Activated B cell treated with CpG ODN at 0.5 μM for 24 hours (primary cell): ENCODE measurements at regions of chr5 and their contacts with region 1.

Region 1: GRCh38 chr5:65925601-65926275 is 637 bp upstream of the ERBIN start:
- DNase-seq: peak; percentile 82
- ATAC-seq: peak; percentile 73
- H3K4me3 Mint-ChIP-seq: peak overlapping the region; percentile 93
- H3K27ac Mint-ChIP-seq: peak overlapping the region; percentile 96
- H3K4me1 Mint-ChIP-seq: peaks cover 42% of the 10 kb centered on the region
- H3K27me3 Mint-ChIP-seq: no peaks in the 10 kb centered on the region
- CTCF ChIP-seq: no peak

Region 2: GRCh38 chr5:65423623-65424022 is 502.1 kb before region 1 on chr5:
- CTCF ChIA-PET with region 1: no interaction called
- POLR2A ChIA-PET with region 1: no interaction called
- intact Hi-C with region 1: no loop called
- DNase-seq: no peak
- ATAC-seq: no peak
- H3K4me3 Mint-ChIP-seq: no peak overlapping the region
- H3K27ac Mint-ChIP-seq: no peak overlapping the region
- H3K4me1 Mint-ChIP-seq: no peaks in the 10 kb centered on the region
- H3K27me3 Mint-ChIP-seq: no peaks in the 10 kb centered on the region
- CTCF ChIP-seq: no peak

Region 3: GRCh38 chr5:65451436-65451835 is 474.3 kb before region 1 on chr5:
- CTCF ChIA-PET with region 1: no interaction called
- POLR2A ChIA-PET with region 1: no interaction called
- intact Hi-C with region 1: no loop called
- DNase-seq: no peak
- ATAC-seq: no peak
- H3K4me3 Mint-ChIP-seq: no peak overlapping the region
- H3K27ac Mint-ChIP-seq: no peak overlapping the region
- H3K4me1 Mint-ChIP-seq: no peaks in the 10 kb centered on the region
- H3K27me3 Mint-ChIP-seq: no peaks in the 10 kb centered on the region
- CTCF ChIP-seq: no peak

Region 4: GRCh38 chr5:65624571-65625555 is 300.9 kb before region 1 on chr5 and contains the starts of genes SHLD3 and TRAPPC13:
- CTCF ChIA-PET with region 1: no interaction called
- POLR2A ChIA-PET with region 1: interaction called, 4 read pairs
- intact Hi-C with region 1: loop called (anchors 1 kb)
- DNase-seq: peak; percentile 58
- ATAC-seq: peak; percentile 74
- H3K4me3 Mint-ChIP-seq: peak within 1 kb of the TSS; percentile 99
- H3K27ac Mint-ChIP-seq: peak within 1 kb of the TSS; percentile 98
- H3K4me1 Mint-ChIP-seq: peaks cover 43% of the 10 kb centered on the region
- H3K27me3 Mint-ChIP-seq: no peaks in the 10 kb centered on the region
- CTCF ChIP-seq: no peak
- total RNA-seq, gene SHLD3: 5.7 and 6.2 TPM in 2 replicates
- total RNA-seq, gene TRAPPC13: 19.3 and 29.0 TPM in 2 replicates

Region 5: GRCh38 chr5:65651144-65651543 is 274.6 kb before region 1 on chr5:
- CTCF ChIA-PET with region 1: no interaction called
- POLR2A ChIA-PET with region 1: no interaction called
- intact Hi-C with region 1: no loop called
- DNase-seq: no peak
- ATAC-seq: no peak
- H3K4me3 Mint-ChIP-seq: no peak overlapping the region
- H3K27ac Mint-ChIP-seq: no peak overlapping the region
- H3K4me1 Mint-ChIP-seq: no peaks in the 10 kb centered on the region
- H3K27me3 Mint-ChIP-seq: no peaks in the 10 kb centered on the region
- CTCF ChIP-seq: no peak

Region 6: GRCh38 chr5:65742565-65743231 is 183.0 kb before region 1 on chr5:
- CTCF ChIA-PET with region 1: no interaction called
- POLR2A ChIA-PET with region 1: interaction called, 6 read pairs
- intact Hi-C with region 1: loop called (anchors 5 kb)
- DNase-seq: no peak
- ATAC-seq: peak; percentile 54
- H3K4me3 Mint-ChIP-seq: no peak overlapping the region
- H3K27ac Mint-ChIP-seq: no peak overlapping the region
- H3K4me1 Mint-ChIP-seq: peaks cover 5% of the 10 kb centered on the region
- H3K27me3 Mint-ChIP-seq: no peaks in the 10 kb centered on the region
- CTCF ChIP-seq: no peak

Region 7: GRCh38 chr5:65825408-65826328 is 100.1 kb before region 1 on chr5:
- CTCF ChIA-PET with region 1: no interaction called
- POLR2A ChIA-PET with region 1: no interaction called
- intact Hi-C with region 1: loop called (anchors 5 kb)
- DNase-seq: no peak
- ATAC-seq: peak; percentile 62
- H3K4me3 Mint-ChIP-seq: peak overlapping the region; percentile 46
- H3K27ac Mint-ChIP-seq: peak overlapping the region; percentile 41
- H3K4me1 Mint-ChIP-seq: peaks cover 24% of the 10 kb centered on the region
- H3K27me3 Mint-ChIP-seq: no peaks in the 10 kb centered on the region
- CTCF ChIP-seq: no peak

Region 8: GRCh38 chr5:65961633-65962032 is 35.9 kb after region 1 on chr5:
- CTCF ChIA-PET with region 1: no interaction called
- POLR2A ChIA-PET with region 1: no interaction called
- intact Hi-C with region 1: loop called (anchors 1 kb)
- DNase-seq: no peak
- ATAC-seq: peak; percentile 95
- H3K4me3 Mint-ChIP-seq: peak overlapping the region; percentile 2
- H3K27ac Mint-ChIP-seq: peak overlapping the region; percentile 60
- H3K4me1 Mint-ChIP-seq: peaks cover 52% of the 10 kb centered on the region
- H3K27me3 Mint-ChIP-seq: no peaks in the 10 kb centered on the region
- CTCF ChIP-seq: no peak

Region 9: GRCh38 chr5:66041627-66042026 is 115.9 kb after region 1 on chr5:
- CTCF ChIA-PET with region 1: no interaction called
- POLR2A ChIA-PET with region 1: no interaction called
- intact Hi-C with region 1: no loop called
- DNase-seq: no peak
- ATAC-seq: no peak
- H3K4me3 Mint-ChIP-seq: no peak overlapping the region
- H3K27ac Mint-ChIP-seq: no peak overlapping the region
- H3K4me1 Mint-ChIP-seq: peaks cover 7% of the 10 kb centered on the region
- H3K27me3 Mint-ChIP-seq: no peaks in the 10 kb centered on the region
- CTCF ChIP-seq: no peak

Region 10: DNA sequence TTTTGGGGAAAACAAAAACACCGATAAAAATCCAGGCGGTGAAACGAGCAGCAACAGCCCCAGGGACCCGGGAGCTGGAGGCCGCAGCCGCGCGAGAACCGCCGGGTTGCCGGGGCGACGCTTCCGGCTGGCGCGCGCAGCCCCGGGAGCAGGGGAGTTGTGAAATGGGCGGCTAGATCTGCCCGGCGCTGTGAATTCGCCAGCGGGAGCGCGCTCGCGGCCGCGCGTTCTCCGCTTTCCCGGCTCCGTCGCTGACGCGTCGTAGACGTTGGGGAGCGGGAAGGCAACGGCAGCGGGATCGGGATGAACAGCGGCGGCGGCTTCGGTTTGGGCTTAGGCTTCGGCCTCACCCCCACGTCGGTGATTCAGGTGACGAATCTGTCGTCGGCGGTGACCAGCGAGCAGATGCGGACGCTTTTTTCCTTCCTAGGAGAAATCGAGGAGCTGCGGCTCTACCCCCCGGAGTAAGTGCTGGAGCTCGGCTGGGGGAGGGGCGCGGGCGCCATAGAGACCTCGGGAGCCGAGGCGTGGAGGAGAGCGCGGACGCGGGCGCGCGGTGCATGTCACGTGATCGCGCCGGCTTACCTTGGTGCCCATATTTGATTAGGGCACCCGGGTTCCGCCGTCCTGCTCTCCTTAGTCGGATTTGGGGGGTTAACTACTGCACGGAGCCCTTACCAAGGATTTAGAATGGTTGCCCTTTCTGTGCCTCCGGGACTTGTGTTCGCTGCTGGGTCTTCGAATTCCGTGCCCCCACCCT is 218.5 kb after region 1 on chr5 and contains the start of gene SREK1:
- CTCF ChIA-PET with region 1: no interaction called
- POLR2A ChIA-PET with region 1: interaction called, 25 read pairs
- intact Hi-C with region 1: loop called (anchors 1 kb)
- DNase-seq: peak; percentile 84
- ATAC-seq: peak; percentile 86
- H3K4me3 Mint-ChIP-seq: peak within 1 kb of the TSS; percentile 99
- H3K27ac Mint-ChIP-seq: peak within 1 kb of the TSS; percentile 100
- H3K4me1 Mint-ChIP-seq: peaks cover 33% of the 10 kb centered on the region
- H3K27me3 Mint-ChIP-seq: no peaks in the 10 kb centered on the region
- CTCF ChIP-seq: no peak
- total RNA-seq, gene SREK1: 78.2 and 104 TPM in 2 replicates